Heart left ventricle (tissue), 16 donors: ENCODE measurements at regions of chr7 and their contacts with region 1.

Region 1: GRCh38 chr7:23247603-23248335 is 1.2 kb downstream of the GPNMB start:
- DNase-seq: peak; percentile 42 to 81 (median 52)
- ATAC-seq: peak; percentile 48 to 85 (median 76)
- H3K4me3 ChIP-seq: peak overlapping the region; percentile 11 to 72 (median 58)
- H3K27ac ChIP-seq: peak overlapping the region; percentile 16 to 90 (median 82)
- H3K4me1 ChIP-seq: peaks cover 0 to 33% (median 15%) of the 10 kb centered on the region in 12 donors
- H3K27me3 ChIP-seq: peaks cover 0 to 4% (median 0%) of the 10 kb centered on the region in 9 donors
- CTCF ChIP-seq: no peak
- POLR2A ChIP-seq: peak in 1 of 2 donors; percentile 14

Region 2: GRCh38 chr7:23168111-23168885 is 79.5 kb before region 1 on chr7:
- intact Hi-C with region 1: no loop called
- DNase-seq: no peak
- ATAC-seq: peak; percentile 71 to 90 (median 80)
- H3K4me3 ChIP-seq: no peak overlapping the region
- H3K27ac ChIP-seq: peak overlapping the region; percentile 25 to 79 (median 66)
- H3K4me1 ChIP-seq: peaks cover 0 to 12% (median 0%) of the 10 kb centered on the region in 12 donors
- H3K27me3 ChIP-seq: no peaks in the 10 kb centered on the region
- CTCF ChIP-seq: no peak
- POLR2A ChIP-seq: no peak

Region 3: DNA sequence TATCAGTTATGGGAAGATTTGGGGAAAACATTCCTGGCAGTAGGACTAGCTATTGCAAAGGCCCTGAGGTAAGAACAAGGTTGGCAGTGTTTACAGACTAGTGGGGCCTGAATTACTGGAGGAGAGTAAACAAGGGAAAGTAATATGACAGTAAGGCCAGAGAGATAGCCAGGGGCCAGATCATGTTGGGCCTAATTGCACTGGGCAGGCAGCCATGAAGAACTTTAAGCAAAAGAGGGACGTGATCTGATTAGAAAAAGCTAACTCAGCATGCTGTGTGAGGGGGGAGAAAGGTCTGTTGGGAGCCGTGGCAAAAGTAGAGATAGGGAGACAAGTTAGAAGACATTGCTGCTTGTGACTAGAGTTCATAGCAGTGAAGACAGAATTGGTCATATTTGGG is 56.7 kb before region 1 on chr7:
- intact Hi-C with region 1: loop called in 8 of 10 experiments (anchors 5 kb)
- DNase-seq: no peak
- ATAC-seq: peak in 1 of 4 donors; percentile 45
- H3K4me3 ChIP-seq: no peak overlapping the region
- H3K27ac ChIP-seq: peak overlapping the region in 1 of 12 donors; percentile 23
- H3K4me1 ChIP-seq: peaks cover 0 to 16% (median 2%) of the 10 kb centered on the region in 12 donors
- H3K27me3 ChIP-seq: no peaks in the 10 kb centered on the region
- CTCF ChIP-seq: no peak
- POLR2A ChIP-seq: no peak

Region 4: DNA sequence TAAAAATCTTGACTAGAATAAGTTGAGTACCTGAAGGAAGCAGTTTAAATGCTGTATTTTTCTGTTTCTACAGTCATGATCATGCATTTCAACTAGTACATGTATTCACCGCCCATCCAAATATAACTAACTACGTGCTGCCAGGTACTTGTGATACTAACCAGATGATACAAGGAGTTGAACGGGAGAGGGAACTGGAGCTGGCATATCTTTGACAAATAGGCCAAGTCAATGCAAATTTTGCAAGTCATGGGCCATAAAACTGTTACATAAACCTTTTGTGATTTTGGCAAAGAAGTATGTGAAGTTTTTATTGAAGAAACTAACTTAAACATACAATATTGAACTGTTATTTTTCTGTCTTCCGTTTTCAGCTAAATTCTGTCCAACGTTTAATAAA is 51.5 kb before region 1 on chr7:
- intact Hi-C with region 1: loop called in 5 of 10 experiments (anchors 5 kb)
- DNase-seq: no peak
- ATAC-seq: peak; percentile 82 to 93 (median 92)
- H3K4me3 ChIP-seq: no peak overlapping the region
- H3K27ac ChIP-seq: peak overlapping the region in 11 of 12 donors; percentile 3 to 78 (median 48)
- H3K4me1 ChIP-seq: peaks cover 0 to 18% (median 4%) of the 10 kb centered on the region in 12 donors
- H3K27me3 ChIP-seq: no peaks in the 10 kb centered on the region
- CTCF ChIP-seq: no peak
- POLR2A ChIP-seq: no peak

Region 5: DNA sequence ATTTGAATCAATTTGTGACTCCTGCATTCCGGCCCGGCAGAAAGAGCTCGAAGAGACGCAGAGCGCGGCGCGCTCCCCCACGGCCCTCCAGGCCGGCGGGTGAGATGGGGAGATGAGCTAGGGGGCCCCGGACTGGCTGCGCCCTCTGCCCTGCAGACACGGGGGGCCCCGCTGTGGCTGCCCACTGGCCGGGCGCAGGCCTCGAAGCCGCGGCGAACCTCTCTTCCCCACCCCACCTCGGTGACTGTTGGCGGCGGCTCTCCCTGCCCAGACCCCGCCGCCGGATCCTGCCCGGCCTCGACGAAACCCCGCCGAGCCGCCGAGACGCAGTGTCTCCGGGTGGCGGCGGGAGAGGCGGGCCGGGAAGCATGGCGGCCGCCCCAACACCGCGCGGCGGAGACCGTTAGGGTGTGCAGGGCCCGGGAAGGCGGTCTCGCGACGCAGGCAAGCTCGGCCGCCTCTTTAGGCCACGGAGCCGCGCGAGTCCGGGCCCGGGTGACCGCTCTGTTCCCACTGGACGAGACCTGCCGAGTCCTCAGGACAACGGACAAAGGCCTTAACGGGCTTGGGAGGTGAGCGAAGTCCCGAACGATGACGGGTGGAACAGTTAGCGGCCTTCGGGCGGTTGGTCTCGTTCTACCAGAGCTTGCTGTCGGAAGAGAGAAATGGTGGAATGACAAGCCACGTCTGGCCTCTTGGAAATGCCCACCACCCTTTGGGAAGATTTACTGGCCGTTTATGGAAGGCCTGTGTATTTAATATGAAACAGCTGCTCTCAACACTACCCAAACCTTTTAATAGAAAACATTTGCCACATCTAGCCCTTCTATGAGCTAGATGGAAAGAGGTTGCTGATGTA is 41.6 kb before region 1 on chr7:
- intact Hi-C with region 1: loop called in 3 of 10 experiments (anchors 5 kb)
- DNase-seq: peak in 2 of 5 donors; percentile 42 to 68
- ATAC-seq: peak in 3 of 4 donors; percentile 47 to 82 (median 78)
- H3K4me3 ChIP-seq: peak overlapping the region in 9 of 12 donors; percentile 34 to 53 (median 41)
- H3K27ac ChIP-seq: peak overlapping the region in 6 of 12 donors; percentile 11 to 79 (median 34)
- H3K4me1 ChIP-seq: peaks cover 0 to 21% (median 0%) of the 10 kb centered on the region in 12 donors
- H3K27me3 ChIP-seq: no peaks in the 10 kb centered on the region
- CTCF ChIP-seq: no peak
- POLR2A ChIP-seq: no peak